Mammary epithelial cell (primary cell): ENCODE measurements at regions of chr2 and their contacts with region 1.

Region 1: GRCh38 chr2:181586569-181587081 is 70.3 kb downstream of the CERKL start:
- DNase-seq: peak; percentile 53
- H3K4me3 ChIP-seq: no peak overlapping the region
- H3K27ac ChIP-seq: no peak overlapping the region
- H3K4me1 ChIP-seq: peaks cover 11% of the 10 kb centered on the region
- H3K27me3 ChIP-seq: no peaks in the 10 kb centered on the region
- CTCF ChIP-seq: no peak

Region 2: DNA sequence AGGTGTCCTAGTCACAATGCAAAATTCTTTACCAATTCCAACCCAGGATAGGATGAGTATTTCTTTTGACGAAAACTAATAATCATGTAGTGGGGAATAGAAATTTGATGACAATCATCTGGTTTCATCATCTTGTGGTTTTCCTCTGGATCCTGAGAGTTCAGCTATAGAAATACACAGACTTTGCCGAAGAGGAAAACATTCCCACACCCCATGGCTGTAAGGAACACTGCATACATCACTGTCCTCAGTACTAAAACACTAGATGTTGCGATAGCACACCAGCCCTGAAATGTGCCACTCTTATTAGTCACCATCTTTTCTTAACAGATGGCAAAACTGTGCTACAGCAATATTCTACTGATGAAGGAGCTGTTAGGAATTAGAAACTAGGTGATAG is 40.9 kb after region 1 on chr2:
- CTCF ChIA-PET with region 1: no interaction called
- dilution Hi-C with region 1: loop called (anchors 5 kb)
- in situ Hi-C with region 1: no loop called
- intact Hi-C with region 1: no loop called
- DNase-seq: peak; percentile 54
- H3K4me3 ChIP-seq: no peak overlapping the region
- H3K27ac ChIP-seq: no peak overlapping the region
- H3K4me1 ChIP-seq: no peaks in the 10 kb centered on the region
- H3K27me3 ChIP-seq: peaks cover 6% of the 10 kb centered on the region
- CTCF ChIP-seq: no peak

Region 3: GRCh38 chr2:181790716-181791649 is 204.4 kb after region 1 on chr2:
- CTCF ChIA-PET with region 1: no interaction called
- dilution Hi-C with region 1: no loop called
- in situ Hi-C with region 1: no loop called
- intact Hi-C with region 1: no loop called
- DNase-seq: peak; percentile 97
- H3K4me3 ChIP-seq: no peak overlapping the region
- H3K27ac ChIP-seq: peak overlapping the region; percentile 99
- H3K4me1 ChIP-seq: peaks cover 56% of the 10 kb centered on the region
- H3K27me3 ChIP-seq: no peaks in the 10 kb centered on the region
- CTCF ChIP-seq: no peak